ENCODE measurements at regions of chr15 and their contacts with region 1.

Region 1: GRCh38 chr15:99169769-99170311 is 65.0 kb downstream of the SYNM start:
- DNase-seq: peak; percentile 61 to 91
- H3K4me3 ChIP-seq: no peak overlapping the region
- H3K27ac ChIP-seq: peak overlapping the region; percentile 92 to 98
- H3K4me1 ChIP-seq: peaks cover 0 to 77% (median 45%) of the 10 kb centered on the region in 4 donors
- H3K27me3 ChIP-seq: no peaks in the 10 kb centered on the region
- CTCF ChIP-seq: no peak

Region 2: DNA sequence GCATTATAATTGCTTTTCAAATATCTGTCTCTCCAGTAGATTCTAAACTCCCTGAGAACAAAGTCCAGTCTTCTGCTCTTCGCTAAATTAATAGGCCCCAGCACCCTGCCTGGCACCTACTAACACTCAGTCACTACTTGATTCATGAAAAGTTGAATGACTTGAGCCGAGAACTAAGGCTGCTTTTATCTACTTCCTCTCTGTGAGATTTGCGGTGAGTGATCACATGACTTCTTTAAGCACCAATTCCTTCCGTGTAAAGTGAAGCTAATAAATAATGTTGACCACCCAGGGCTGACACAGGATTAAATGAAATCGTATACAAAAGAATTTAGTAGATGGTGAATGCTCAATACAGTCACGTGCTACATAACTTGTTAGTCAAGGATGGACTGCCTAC is 117.6 kb before region 1 on chr15:
- intact Hi-C with region 1: no loop called
- DNase-seq: no peak
- H3K4me3 ChIP-seq: no peak overlapping the region
- H3K27ac ChIP-seq: no peak overlapping the region
- H3K4me1 ChIP-seq: no peaks in the 10 kb centered on the region
- H3K27me3 ChIP-seq: no peaks in the 10 kb centered on the region
- CTCF ChIP-seq: no peak

Region 3: DNA sequence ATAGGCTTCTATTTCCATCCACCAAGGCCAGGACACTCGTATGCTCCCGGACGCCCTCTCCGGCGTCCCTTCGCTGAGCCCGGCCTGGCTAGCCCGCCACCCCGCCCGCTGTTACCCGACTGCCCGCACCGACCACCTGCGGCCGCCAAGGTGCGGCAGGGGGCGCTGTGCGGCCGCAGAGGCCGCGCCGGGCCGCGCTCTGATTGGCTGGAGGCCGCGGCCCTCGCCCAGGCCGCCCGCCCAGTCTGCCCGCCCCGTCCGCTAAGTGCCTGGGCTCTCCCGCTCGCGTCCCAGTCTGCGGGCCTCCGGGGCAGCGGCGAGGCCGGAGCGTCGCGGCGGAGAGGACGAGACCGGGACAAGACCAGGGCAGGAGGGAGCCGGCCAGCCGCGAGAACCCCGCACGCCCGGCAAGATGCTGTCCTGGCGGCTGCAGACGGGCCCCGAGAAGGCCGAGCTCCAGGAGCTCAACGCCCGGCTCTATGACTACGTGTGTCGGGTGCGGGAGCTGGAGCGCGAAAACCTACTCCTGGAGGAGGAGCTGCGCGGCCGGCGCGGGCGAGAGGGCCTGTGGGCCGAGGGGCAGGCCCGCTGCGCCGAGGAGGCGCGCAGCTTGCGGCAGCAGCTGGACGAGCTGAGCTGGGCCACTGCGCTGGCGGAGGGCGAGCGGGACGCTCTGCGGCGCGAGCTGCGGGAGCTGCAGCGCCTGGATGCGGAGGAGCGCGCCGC is 64.9 kb before region 1 on chr15 and contains the start of gene SYNM:
- intact Hi-C with region 1: loop called (anchors 5 kb)
- DNase-seq: peak; percentile 75 to 94
- H3K4me3 ChIP-seq: peak within 1 kb of the TSS; percentile 86 to 92
- H3K27ac ChIP-seq: peak within 1 kb of the TSS; percentile 97
- H3K4me1 ChIP-seq: peaks cover 0 to 37% (median 28%) of the 10 kb centered on the region in 4 donors
- H3K27me3 ChIP-seq: no peaks in the 10 kb centered on the region
- CTCF ChIP-seq: peak; percentile 78 to 96

Region 4: GRCh38 chr15:99123706-99124451 is 46.0 kb before region 1 on chr15:
- intact Hi-C with region 1: loop called (anchors 5 kb)
- DNase-seq: peak; percentile 87 to 95
- H3K4me3 ChIP-seq: peak overlapping the region; percentile 35 to 43
- H3K27ac ChIP-seq: peak overlapping the region; percentile 77 to 92
- H3K4me1 ChIP-seq: peaks cover 0 to 77% (median 54%) of the 10 kb centered on the region in 4 donors
- H3K27me3 ChIP-seq: no peaks in the 10 kb centered on the region
- CTCF ChIP-seq: no peak

Region 5: GRCh38 chr15:99197856-99198255 is 28.0 kb after region 1 on chr15:
- intact Hi-C with region 1: no loop called
- DNase-seq: no peak
- H3K4me3 ChIP-seq: no peak overlapping the region
- H3K27ac ChIP-seq: no peak overlapping the region
- H3K4me1 ChIP-seq: no peaks in the 10 kb centered on the region
- H3K27me3 ChIP-seq: no peaks in the 10 kb centered on the region
- CTCF ChIP-seq: no peak